ENCODE measurements at regions of chr2 and their contacts with region 1.

Region 1: GRCh38 chr2:121185571-121186074 is 99.4 kb downstream of the TFCP2L1 start:
- DNase-seq: peak; percentile 93
- H3K4me3 Mint-ChIP-seq: peak overlapping the region; percentile 16
- H3K27ac Mint-ChIP-seq: peak overlapping the region; percentile 49
- H3K4me1 Mint-ChIP-seq: peaks cover 49% of the 10 kb centered on the region
- H3K27me3 Mint-ChIP-seq: no peaks in the 10 kb centered on the region
- CTCF ChIP-seq: no peak

Region 2: GRCh38 chr2:121175326-121175725 is 10.3 kb before region 1 on chr2:
- CTCF ChIA-PET with region 1: no interaction called
- POLR2A ChIA-PET with region 1: interaction called, 10 read pairs
- intact Hi-C with region 1: no loop called
- DNase-seq: no peak
- H3K4me3 Mint-ChIP-seq: no peak overlapping the region
- H3K27ac Mint-ChIP-seq: no peak overlapping the region
- H3K4me1 Mint-ChIP-seq: peaks cover 23% of the 10 kb centered on the region
- H3K27me3 Mint-ChIP-seq: no peaks in the 10 kb centered on the region
- CTCF ChIP-seq: no peak

Region 3: DNA sequence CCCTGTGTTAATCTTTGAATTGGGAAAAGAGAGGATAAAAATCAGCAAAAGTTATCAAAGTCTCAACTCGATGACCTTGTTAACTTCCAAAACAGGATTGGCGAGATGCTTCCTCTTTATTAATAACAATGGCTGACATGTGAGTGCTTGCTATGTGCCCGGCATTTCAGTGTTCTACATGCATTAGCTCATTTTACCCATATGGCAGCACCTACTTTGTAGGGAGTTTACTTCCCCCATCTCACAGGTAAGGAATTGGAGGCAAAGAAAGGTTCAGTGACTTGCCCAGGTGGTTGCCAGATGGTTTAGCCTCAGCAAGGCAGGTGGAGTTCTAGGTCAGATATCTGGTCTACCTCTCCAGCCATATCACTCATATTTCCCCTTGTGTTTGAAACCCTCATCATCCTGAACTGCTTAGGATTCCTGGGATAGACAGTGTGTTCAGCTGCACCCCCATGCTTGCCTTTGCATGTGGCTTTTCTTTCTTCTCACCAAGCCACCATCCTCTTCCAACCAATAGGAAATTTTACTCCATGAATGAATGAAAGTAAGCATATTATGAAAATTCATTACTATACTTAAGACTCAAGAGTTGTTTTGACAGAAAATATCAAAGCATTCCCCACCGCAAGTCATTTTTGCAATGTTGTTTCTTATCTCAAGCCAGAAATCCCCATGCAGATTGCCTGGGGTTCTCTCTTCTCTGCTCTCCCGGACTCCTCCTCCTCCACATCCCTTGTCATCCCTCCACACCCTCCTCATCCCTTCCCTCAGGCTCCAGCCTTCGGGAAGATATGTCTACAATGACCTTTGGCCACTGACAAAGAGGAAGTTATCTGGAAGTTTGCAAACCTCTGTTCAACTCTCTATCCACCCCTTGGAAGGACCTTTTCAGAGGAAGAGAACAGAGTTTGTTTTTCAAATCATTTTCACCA is 87.2 kb after region 1 on chr2:
- CTCF ChIA-PET with region 1: no interaction called
- POLR2A ChIA-PET with region 1: no interaction called
- intact Hi-C with region 1: no loop called
- DNase-seq: no peak
- H3K4me3 Mint-ChIP-seq: no peak overlapping the region
- H3K27ac Mint-ChIP-seq: no peak overlapping the region
- H3K4me1 Mint-ChIP-seq: no peaks in the 10 kb centered on the region
- H3K27me3 Mint-ChIP-seq: no peaks in the 10 kb centered on the region
- CTCF ChIP-seq: no peak

Measured in MCF 10A (cell line).